Heart right ventricle (tissue), 16 donors: ENCODE measurements at regions of chr22 and their contacts with region 1.

Region 1: DNA sequence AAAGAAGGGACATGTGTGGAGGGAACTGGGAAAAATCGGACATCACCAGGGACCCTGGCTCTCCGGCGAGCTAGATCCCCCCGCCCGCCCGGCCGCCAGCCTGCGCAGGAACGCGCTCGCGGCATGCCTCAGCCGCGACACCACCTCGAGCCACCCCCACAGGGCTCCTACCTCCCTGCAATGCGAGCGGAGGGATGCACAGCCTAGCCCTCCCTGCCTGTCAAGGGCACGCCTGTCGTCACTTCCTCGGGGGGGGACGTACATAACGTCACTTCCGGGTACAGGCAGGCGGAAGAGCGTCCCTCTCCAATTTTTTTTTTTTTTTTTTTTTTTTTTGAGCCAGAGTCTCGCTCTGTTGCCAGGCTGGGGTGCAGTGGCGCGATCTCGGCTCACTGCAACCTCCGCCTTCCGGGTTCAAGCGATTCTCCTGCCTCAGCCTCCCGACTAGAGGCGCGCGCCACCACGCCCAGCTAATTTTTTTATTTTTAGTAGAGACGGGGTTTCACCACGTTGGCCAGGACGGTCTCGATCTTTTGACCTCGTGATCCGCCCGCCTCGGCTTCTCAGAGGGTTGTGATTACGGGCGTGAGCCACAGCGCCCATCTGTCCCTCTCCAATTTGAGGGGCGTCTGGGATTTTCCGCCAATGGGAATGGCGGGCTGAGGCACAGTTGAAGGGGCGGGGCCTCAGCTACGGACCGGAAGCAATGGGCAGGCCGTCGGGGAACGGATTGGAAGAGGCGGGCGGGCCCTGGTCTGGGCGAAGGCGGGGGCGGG is at the start of gene TXN2:
- DNase-seq: peak; percentile 97 to 98
- ATAC-seq: peak; percentile 94 to 97 (median 96)
- H3K4me3 ChIP-seq: peak within 1 kb of the TSS; percentile 55 to 94 (median 74)
- H3K27ac ChIP-seq: peak within 1 kb of the TSS; percentile 96 to 100 (median 99)
- H3K4me1 ChIP-seq: peaks cover 0 to 24% (median 20%) of the 10 kb centered on the region in 9 donors
- H3K27me3 ChIP-seq: no peaks in the 10 kb centered on the region
- CTCF ChIP-seq: no peak
- total RNA-seq, gene TXN2: 107 to 142 (median 122) TPM

Region 2: DNA sequence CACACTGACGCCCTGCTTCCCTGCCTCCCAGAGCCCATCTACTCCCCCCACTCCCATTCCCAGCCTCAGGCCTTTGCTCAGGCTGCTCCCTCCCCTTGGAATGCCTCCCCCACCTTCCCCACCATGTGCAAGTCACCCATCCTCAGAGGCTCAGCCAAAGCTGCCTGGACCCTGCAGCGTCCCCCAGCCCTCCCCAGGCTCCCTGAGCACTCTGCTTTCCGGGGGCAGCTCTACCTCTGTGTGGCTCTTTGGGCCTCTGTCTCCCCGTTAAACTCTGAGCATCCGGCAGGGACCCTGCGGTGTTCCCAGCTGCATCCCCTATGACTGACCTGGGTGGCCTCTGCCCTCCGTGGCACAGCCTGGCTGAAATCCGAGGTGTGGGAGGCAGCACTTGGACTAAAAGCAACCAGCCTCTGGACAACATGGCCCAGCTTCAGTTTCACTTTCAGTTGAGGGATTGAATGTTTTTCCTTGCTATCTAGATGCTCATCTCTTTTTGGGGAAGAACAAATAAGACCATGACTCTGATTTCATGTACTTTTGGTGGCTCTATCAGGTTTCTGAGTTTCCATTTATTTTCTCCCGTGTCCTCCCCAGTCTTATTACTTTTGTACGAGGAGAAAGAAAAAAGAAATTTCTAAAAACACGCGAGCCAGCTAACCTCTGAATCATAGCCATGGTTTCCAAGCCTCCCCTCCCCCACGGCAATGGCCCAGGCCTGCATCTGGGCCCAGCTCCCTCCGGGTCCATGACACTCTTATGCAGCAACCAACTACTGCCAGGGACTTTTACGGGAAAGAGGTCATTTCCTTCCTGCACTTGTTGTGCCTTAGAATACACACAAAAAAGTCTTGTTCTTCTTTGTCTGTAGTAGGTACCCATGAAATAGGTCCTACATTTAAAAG is 324.8 kb before region 1 on chr22:
- intact Hi-C with region 1: loop called in 2 of 10 experiments (anchors 10 kb)
- DNase-seq: peak; percentile 82 to 94
- ATAC-seq: peak; percentile 78 to 90 (median 84)
- H3K4me3 ChIP-seq: peak overlapping the region; percentile 26 to 69 (median 63)
- H3K27ac ChIP-seq: peak overlapping the region; percentile 88 to 95 (median 94)
- H3K4me1 ChIP-seq: peaks cover 10 to 98% (median 84%) of the 10 kb centered on the region in 9 donors
- H3K27me3 ChIP-seq: no peaks in the 10 kb centered on the region
- CTCF ChIP-seq: no peak

Region 3: GRCh38 chr22:36419177-36419911 is 62.2 kb before region 1 on chr22:
- intact Hi-C with region 1: no loop called
- DNase-seq: peak; percentile 32 to 66
- ATAC-seq: peak; percentile 69 to 84 (median 76)
- H3K4me3 ChIP-seq: peak overlapping the region in 7 of 10 donors; percentile 19 to 37 (median 24)
- H3K27ac ChIP-seq: peak overlapping the region; percentile 67 to 90 (median 82)
- H3K4me1 ChIP-seq: peaks cover 7 to 51% (median 22%) of the 10 kb centered on the region in 9 donors
- H3K27me3 ChIP-seq: no peaks in the 10 kb centered on the region
- CTCF ChIP-seq: no peak

Region 4: GRCh38 chr22:36454916-36455570 is 26.5 kb before region 1 on chr22:
- intact Hi-C with region 1: no loop called
- DNase-seq: peak; percentile 93 to 94
- ATAC-seq: peak; percentile 85 to 92 (median 88)
- H3K4me3 ChIP-seq: peak overlapping the region in 9 of 10 donors; percentile 37 to 59 (median 54)
- H3K27ac ChIP-seq: peak overlapping the region; percentile 72 to 97 (median 94)
- H3K4me1 ChIP-seq: peaks cover 24 to 86% (median 65%) of the 10 kb centered on the region in 9 donors
- H3K27me3 ChIP-seq: no peaks in the 10 kb centered on the region
- CTCF ChIP-seq: peak in 4 of 9 donors; percentile 16 to 48 (median 40)